ENCODE measurements at regions of chr20 and their contacts with region 1.

Region 1: DNA sequence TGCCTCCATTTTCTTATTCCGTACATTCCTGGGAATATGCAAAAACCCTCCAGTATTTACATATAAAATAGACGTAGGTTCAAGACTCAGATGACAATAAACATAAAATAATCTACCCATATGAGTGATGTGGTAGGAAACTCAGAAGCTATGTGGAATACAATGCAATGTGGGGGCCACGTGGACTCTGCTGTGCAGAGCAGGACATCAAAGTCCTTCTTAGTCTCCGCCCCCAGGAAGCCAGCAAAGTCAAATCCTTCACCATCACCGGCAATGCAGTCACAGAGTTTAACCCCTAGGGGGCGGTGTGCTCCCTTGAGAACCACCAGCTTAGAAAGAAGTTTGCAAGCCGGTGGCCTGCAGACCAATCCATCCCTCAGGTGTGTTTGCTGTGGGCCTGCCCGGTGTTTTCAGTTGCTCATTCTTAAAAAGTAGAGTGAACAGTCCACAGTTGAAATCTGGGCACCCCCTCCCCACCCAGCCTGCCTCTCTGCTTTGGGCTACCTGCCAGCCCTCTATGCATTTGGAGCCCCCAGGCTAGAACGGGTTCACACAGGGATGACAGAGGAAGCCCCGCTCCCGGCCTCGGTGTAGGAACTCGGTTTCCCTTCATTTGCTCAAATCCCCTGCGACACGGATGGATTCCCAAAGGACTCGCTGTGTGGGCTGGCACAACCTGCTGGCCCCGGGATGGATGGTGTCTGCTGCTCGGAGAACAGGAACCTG is 59.9 kb downstream of the SULF2 start:
- DNase-seq: peak; percentile 85

Region 2: DNA sequence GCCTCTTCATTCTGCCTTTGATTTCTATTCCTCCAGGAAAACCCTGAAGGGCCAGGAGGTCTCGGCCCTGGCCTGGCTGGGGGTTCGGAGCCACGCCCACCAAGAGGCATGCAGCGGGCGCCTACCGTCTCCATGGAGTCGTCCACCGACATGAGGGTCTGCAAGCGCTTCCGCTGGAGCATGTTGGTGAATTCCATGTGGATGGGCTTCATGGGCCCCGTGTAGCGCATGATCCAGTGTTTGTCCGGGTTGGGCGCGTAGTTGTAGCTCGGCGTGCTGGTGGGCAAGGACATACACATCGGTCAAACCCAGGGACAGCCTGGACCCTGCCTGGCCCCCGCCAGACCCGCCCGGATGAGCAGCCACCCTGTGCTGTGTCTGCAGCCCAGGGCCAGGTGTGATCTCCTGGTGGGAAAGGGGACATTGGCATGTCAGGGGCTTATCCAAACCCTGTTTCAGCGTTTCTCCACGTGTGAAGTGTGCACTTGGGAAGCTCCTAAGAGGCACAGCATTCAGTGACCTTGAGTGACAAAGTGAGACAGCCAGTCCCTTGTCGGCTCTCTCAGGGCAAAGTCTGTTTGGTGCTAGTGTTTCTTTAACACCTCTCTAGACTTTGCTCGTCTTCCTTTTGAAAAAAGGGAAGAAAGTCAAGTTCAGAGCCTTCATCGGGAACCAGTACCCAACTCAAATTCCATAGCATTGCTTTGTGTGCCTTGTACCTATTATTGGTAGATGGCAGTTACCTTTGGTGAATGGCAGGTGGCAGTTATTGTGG is 40.9 kb before region 1 on chr20:
- intact Hi-C with region 1: loop called in 1 of 2 experiments (anchors 1 kb)
- DNase-seq: no peak

Region 3: DNA sequence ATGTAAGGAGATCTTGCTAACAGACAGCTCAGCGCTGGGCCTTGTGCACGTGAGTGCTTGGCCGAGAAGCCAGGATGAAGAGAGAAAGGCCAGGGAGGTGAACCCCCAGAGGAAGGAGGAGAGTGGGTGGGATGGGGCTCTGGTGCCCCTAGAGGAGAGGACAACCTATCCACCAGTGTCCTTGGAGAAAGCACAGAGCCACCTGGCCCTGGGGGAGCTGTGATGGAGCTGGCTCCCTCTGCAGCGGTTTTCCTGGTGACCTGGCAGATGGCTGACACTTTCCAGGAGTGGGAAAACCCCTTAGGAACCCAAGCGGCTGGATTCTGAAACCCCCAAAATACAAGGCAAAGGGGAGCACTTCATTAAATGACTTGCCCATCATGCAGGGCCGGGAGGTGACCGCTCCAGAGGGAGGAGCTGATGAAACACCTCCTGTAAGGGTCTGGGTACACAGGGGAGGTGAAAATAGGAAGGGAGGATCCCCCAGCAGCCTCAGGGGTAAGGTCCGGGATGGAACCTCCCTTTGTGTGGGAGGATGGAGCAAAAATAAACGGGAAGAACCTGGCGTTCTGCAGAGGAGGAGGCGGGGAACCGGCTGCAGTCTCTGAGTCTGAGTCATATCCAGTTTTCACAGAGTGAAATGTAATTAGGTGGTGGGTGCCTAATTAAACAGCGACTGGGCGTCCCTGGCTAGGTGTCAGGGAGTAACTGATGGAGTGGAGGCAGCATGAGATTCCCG is 20.5 kb before region 1 on chr20:
- intact Hi-C with region 1: no loop called
- DNase-seq: no peak

Region 4: GRCh38 chr20:47740862-47741184 is 15.4 kb after region 1 on chr20:
- intact Hi-C with region 1: no loop called
- DNase-seq: no peak